GM13977 (cell line): ENCODE measurements at regions of chr5 and their contacts with region 1.

Region 1: DNA sequence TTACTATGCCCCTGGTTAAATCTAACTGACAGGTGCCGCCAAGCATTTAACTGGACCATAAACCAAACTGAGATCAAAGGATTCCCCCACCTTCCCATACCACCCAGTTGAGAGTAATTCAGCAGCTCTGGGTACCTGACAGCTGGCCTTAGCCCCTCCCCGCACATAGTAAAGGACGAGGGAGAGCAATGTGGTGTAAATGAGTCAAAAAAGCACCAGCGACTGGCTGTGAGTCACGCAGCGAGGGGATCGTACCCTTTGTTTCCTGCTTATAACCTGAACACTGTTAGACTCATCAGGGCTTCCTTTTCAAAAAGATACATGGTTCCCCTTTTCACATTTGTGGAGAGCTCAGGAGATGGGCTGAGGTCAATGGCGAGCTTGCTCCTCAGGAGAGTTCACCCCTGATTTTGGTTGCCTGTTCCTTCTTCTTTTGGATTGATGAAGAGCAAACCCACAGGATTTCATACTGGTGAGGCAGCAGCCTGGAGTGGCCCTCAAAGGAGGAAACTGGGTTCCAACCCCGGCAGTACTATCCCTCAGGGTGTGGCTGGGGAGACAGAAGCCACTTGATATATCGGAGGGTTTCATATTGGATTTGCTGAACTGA is 71.5 kb downstream of the ANKRD33B start:
- DNase-seq: peak; percentile 90
- CTCF ChIP-seq: no peak

Region 2: DNA sequence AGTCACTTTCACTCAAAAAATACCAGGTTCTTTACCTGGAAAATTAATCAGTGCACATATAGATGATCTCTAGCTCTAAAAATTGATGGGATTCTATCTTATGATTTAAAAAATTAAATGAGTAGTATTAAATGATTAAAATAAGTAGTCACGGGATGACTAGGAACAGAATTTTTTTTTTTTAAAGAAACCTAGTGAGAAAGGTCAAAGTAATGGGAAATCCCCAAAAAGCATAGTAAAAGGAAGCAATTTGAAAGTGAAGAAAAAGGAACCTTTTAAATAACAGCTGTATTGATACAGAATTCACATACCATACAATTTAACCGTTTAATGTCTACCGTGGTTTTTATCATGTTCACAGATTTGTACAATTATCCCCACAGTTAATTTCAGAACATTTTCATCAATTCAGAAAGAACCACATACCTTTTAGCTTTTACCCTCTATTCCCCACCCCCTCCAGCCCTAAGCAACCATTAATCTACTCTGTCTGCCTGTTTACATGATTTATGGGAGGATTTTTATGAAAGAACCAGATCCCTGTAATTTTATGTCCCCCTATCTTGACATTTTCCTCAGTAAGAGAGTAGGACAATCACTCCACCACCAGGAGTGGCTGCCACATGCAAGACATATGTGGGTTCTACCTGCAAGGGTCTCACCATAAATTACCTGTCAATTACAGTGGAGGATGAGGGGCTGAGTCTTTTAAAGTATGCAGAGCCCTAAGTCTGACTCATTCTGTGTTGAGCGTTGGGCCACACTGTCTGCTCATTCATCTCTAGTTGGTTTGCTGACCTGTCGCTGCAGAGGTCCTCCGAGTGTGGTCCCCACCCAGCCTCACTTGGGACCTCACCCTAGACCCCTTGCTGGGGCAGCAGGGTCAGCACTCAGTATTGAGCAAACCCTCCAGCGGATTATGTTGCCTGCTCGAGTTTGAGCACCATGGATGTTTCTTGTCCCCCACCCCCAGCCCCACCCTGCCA is 55.5 kb before region 1 on chr5:
- in situ Hi-C with region 1: loop called (anchors 5 kb)
- DNase-seq: no peak
- CTCF ChIP-seq: no peak